Lower lobe of right lung (tissue), 2 donors: ENCODE measurements at regions of chr12 and their contacts with region 1.

Region 1: DNA sequence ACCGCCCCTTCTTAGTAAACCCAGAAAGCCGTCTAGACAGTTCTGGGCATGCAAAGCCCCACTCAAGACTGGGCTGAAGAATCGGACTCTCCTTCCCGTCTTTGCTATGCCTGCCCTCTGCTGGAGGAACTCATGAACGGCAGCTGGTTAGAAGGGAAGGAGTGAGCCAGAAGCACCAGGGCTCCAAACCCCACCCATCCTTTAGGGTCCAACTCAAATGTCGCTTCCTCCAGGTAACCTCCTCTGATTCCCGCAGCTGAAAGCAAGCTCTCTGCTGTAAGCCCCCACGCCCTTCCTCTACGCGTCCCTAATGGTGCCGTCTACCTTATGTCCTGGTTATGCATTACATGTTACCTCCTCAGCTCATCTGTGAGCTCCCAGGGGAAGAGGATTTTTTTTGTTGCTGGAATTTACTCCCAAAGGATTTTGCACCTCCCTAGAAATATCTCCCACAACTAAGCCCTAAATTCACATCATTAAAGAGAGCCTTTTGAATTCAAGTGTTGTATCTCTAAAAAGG is 59.0 kb upstream of the SCN8A start:
- DNase-seq: peak; percentile 72
- ATAC-seq: peak; percentile 92
- H3K4me3 ChIP-seq: no peak overlapping the region
- H3K27ac ChIP-seq: no peak overlapping the region
- H3K4me1 ChIP-seq: no peaks in the 10 kb centered on the region
- H3K27me3 ChIP-seq: peaks cover 15% of the 10 kb centered on the region
- CTCF ChIP-seq: peak; percentile 89

Region 2: GRCh38 chr12:51403681-51404136 is 128.3 kb before region 1 on chr12:
- intact Hi-C with region 1: no loop called
- DNase-seq: peak; percentile 77
- ATAC-seq: peak; percentile 80 to 86
- H3K4me3 ChIP-seq: no peak overlapping the region
- H3K27ac ChIP-seq: no peak overlapping the region
- H3K4me1 ChIP-seq: no peaks in the 10 kb centered on the region
- H3K27me3 ChIP-seq: no peaks in the 10 kb centered on the region
- CTCF ChIP-seq: no peak

Region 3: GRCh38 chr12:51424662-51425438 is 107.2 kb before region 1 on chr12 and contains the start of gene SLC4A8:
- intact Hi-C with region 1: loop called (anchors 5 kb)
- DNase-seq: peak; percentile 88
- ATAC-seq: peak; percentile 91 to 94
- H3K4me3 ChIP-seq: peak within 1 kb of the TSS; percentile 60
- H3K27ac ChIP-seq: no peak within 1 kb of the TSS
- H3K4me1 ChIP-seq: peaks cover 12% of the 10 kb centered on the region
- H3K27me3 ChIP-seq: peaks cover 6% of the 10 kb centered on the region
- CTCF ChIP-seq: peak; percentile 73
- total RNA-seq, gene SLC4A8: 8.3 TPM